ENCODE measurements at regions of chr2 and their contacts with region 1.

Region 1: GRCh38 chr2:85826990-85827878 is 61.6 kb downstream of the ST3GAL5 start:
- DNase-seq: peak; percentile 57 to 90 (median 80)
- ATAC-seq: peak; percentile 95 to 99 (median 98)
- H3K4me3 ChIP-seq: no peak overlapping the region
- H3K4me3 Mint-ChIP-seq: peak overlapping the region in 1 of 3 donors; percentile 28
- H3K27ac ChIP-seq: no peak overlapping the region
- H3K27ac Mint-ChIP-seq: peak overlapping the region; percentile 39 to 55
- H3K4me1 ChIP-seq: peaks cover 0 to 14% of the 10 kb centered on the region in 2 experiments
- H3K4me1 Mint-ChIP-seq: peaks cover 24 to 28% (median 25%) of the 10 kb centered on the region in 3 donors
- H3K27me3 ChIP-seq: peaks cover 0 to 13% of the 10 kb centered on the region in 2 experiments
- H3K27me3 Mint-ChIP-seq: peaks cover 0 to 2% of the 10 kb centered on the region in 2 donors

Region 2: GRCh38 chr2:85852937-85853498 is 25.8 kb after region 1 on chr2:
- CTCF ChIA-PET with region 1: interaction called in 1 of 2 experiments, 18 read pairs
- POLR2A ChIA-PET with region 1: interaction called in 1 of 2 experiments, 4 read pairs
- DNase-seq: peak; percentile 46 to 86 (median 74)
- ATAC-seq: peak; percentile 83 to 86 (median 85)
- H3K4me3 ChIP-seq: peak overlapping the region; percentile 41 to 60
- H3K4me3 Mint-ChIP-seq: peak overlapping the region; percentile 69 to 81 (median 77)
- H3K27ac ChIP-seq: peak overlapping the region; percentile 97
- H3K27ac Mint-ChIP-seq: peak overlapping the region; percentile 99 to 100
- H3K4me1 ChIP-seq: peaks cover 35 to 64% of the 10 kb centered on the region in 2 experiments
- H3K4me1 Mint-ChIP-seq: peaks cover 67 to 86% (median 76%) of the 10 kb centered on the region in 3 donors
- H3K27me3 ChIP-seq: no peaks in the 10 kb centered on the region
- H3K27me3 Mint-ChIP-seq: no peaks in the 10 kb centered on the region

Region 3: GRCh38 chr2:85878719-85879385 is 51.6 kb after region 1 on chr2:
- CTCF ChIA-PET with region 1: interaction called in 1 of 2 experiments, 10 read pairs
- POLR2A ChIA-PET with region 1: no interaction called
- DNase-seq: no peak
- ATAC-seq: peak in 2 of 4 experiments; percentile 51 to 64
- H3K4me3 ChIP-seq: no peak overlapping the region
- H3K4me3 Mint-ChIP-seq: peak overlapping the region in 1 of 3 donors; percentile 64
- H3K27ac ChIP-seq: no peak overlapping the region
- H3K27ac Mint-ChIP-seq: peak overlapping the region; percentile 70 to 75
- H3K4me1 ChIP-seq: peaks cover 19 to 34% of the 10 kb centered on the region in 2 experiments
- H3K4me1 Mint-ChIP-seq: peaks cover 73 to 81% (median 74%) of the 10 kb centered on the region in 3 donors
- H3K27me3 ChIP-seq: no peaks in the 10 kb centered on the region
- H3K27me3 Mint-ChIP-seq: no peaks in the 10 kb centered on the region

Region 4: GRCh38 chr2:85888684-85889626 is 61.7 kb after region 1 on chr2 and contains the start of gene ST3GAL5:
- CTCF ChIA-PET with region 1: interaction called, 23 to 59 read pairs
- POLR2A ChIA-PET with region 1: interaction called in 1 of 2 experiments, 3 read pairs
- DNase-seq: peak; percentile 81 to 97 (median 90)
- ATAC-seq: peak; percentile 82 to 89 (median 86)
- H3K4me3 ChIP-seq: peak within 1 kb of the TSS; percentile 85 to 92
- H3K4me3 Mint-ChIP-seq: peak within 1 kb of the TSS; percentile 93 to 96 (median 95)
- H3K27ac ChIP-seq: peak within 1 kb of the TSS; percentile 80
- H3K27ac Mint-ChIP-seq: peak within 1 kb of the TSS; percentile 93 to 98
- H3K4me1 ChIP-seq: peaks cover 30 to 67% of the 10 kb centered on the region in 2 experiments
- H3K4me1 Mint-ChIP-seq: peaks cover 70 to 77% (median 76%) of the 10 kb centered on the region in 3 donors
- H3K27me3 ChIP-seq: no peaks in the 10 kb centered on the region
- H3K27me3 Mint-ChIP-seq: no peaks in the 10 kb centered on the region
- total RNA-seq, gene ST3GAL5: 22.8 to 56.2 (median 31.9) TPM

Region 5: DNA sequence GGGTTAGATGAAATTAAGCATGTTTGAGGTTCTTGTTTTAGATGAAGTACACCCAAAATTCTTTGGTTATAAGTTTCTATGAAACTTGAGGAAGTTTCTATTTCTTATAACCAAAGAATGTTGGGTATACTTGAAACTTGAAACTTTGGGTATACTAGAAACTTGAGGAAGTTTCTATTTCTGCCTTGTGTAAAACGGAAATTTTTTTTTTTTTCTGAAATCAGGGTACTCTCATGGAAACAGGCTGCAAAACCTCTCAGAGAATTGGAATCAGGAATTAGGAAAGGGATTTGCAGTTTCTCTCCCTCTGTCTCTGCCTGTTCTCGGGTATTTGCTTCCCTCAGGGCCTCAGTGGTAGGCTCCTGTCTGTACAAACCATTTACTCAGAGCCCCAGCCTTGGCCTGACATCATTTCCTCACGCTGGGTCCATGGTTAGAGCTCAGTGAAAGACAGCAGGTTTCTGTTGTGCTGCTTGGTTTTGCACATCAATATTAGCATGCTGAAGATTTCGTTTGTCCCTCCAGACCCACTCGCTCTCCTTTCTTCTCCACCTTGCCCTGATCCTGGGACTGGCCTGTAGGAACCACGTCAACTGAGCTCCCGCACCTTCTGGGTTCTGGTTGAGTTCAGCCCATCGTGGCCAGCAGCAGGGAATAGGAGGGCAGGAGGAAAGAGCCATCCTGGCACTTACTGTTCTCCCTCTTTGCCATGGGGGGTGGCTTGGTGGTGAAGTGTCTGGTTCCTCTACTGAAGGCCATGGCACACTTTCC is 172.0 kb after region 1 on chr2:
- CTCF ChIA-PET with region 1: no interaction called
- POLR2A ChIA-PET with region 1: interaction called in 1 of 2 experiments, 10 read pairs
- DNase-seq: peak; percentile 6 to 61 (median 33)
- ATAC-seq: peak; percentile 77 to 97 (median 90)
- H3K4me3 ChIP-seq: no peak overlapping the region
- H3K4me3 Mint-ChIP-seq: peak overlapping the region; percentile 36 to 53 (median 42)
- H3K27ac ChIP-seq: peak overlapping the region; percentile 71
- H3K27ac Mint-ChIP-seq: peak overlapping the region; percentile 92 to 96
- H3K4me1 ChIP-seq: peaks cover 32 to 70% of the 10 kb centered on the region in 2 experiments
- H3K4me1 Mint-ChIP-seq: peaks cover 44 to 69% (median 53%) of the 10 kb centered on the region in 3 donors
- H3K27me3 ChIP-seq: no peaks in the 10 kb centered on the region
- H3K27me3 Mint-ChIP-seq: no peaks in the 10 kb centered on the region

Region 6: DNA sequence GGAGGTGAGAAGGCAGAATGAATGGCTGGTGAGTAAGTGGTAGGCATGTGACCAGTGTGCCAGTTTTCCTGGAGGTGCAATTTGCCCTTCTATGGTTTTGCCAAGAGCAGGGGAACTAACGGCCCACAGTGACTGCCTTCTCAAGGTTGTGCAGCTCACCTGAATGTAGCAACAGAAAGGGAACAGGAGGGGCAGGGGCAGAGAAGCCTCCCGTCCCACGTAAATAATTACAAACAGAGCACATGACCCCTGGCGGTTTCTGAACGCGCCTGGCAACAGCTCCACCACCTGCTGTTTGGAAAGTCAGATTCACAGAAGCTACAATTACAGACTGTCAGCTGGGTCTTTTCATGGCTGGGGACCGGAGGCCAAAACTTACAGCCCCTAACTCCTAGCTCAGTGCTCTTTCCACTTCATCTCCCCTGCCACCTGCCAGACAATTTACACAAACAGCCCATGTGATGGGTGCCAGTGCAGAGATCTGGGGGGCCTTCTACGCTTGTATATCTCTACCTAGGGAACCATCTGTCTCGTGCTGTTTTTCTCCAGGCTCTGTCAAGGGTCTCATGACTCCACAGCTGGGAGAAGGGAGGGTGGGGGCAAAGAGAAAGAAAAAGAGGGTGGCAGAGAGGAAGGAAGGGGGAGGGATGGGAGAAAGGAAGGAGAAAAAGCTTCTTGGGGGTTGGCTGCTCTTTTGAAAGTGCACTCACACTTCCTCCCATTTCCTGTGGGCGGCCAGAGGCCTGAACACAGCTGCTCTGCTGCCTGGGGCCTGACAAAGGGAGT is 208.8 kb after region 1 on chr2:
- CTCF ChIA-PET with region 1: interaction called, 15 to 26 read pairs
- POLR2A ChIA-PET with region 1: interaction called in 1 of 2 experiments, 4 read pairs
- DNase-seq: peak; percentile 38 to 88 (median 75)
- ATAC-seq: peak; percentile 52 to 57 (median 54)
- H3K4me3 ChIP-seq: peak overlapping the region; percentile 27 to 30
- H3K4me3 Mint-ChIP-seq: peak overlapping the region; percentile 67 to 78 (median 74)
- H3K27ac ChIP-seq: peak overlapping the region; percentile 96
- H3K27ac Mint-ChIP-seq: peak overlapping the region; percentile 99
- H3K4me1 ChIP-seq: peaks cover 65 to 84% of the 10 kb centered on the region in 2 experiments
- H3K4me1 Mint-ChIP-seq: peaks cover 85 to 96% (median 89%) of the 10 kb centered on the region in 3 donors
- H3K27me3 ChIP-seq: no peaks in the 10 kb centered on the region
- H3K27me3 Mint-ChIP-seq: no peaks in the 10 kb centered on the region

Region 7: DNA sequence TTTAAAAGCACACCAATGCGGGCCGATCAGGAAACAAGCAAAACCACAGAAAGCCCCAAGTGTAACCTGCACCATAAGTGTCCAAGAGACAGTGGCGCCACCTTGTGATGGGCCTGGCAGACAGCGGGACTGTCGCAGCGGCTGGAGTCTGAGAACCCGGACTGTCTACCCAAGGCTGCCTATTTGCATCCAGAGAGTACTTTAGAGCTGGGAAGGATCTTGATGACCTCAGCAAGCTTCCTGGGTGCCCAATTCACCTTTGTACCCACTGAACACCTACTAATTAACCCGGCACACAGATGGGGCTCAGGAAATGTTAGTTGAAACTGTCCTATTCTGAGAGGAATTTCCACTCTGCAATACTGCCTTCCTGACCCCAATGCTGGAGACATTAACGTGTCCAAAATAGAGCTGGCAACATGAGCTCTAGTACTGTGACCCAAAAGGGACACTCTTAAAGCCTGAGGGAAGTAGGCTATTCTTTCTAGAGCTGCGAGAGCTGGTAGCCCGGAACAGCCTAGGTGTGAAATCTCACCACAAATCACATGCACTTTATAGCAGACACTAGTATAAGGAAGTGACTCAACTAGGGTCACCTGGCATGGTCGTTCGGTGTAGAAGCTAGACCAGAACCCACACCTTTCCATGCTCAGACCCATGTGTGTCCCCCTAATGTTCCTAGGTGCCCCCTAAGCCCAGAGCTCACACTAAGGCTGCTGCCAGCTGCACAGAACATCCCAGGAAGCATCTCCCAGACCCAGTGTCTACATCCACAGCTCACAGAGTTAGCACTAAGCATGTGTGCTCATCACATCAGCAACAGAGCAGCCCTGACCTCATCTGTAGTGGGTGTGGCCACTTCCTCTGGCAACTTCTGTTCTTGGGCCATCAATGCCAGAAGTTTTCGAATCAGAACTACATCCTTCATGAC is 253.0 kb after region 1 on chr2:
- CTCF ChIA-PET with region 1: interaction called, 57 to 154 read pairs
- POLR2A ChIA-PET with region 1: interaction called, 3 read pairs
- DNase-seq: peak; percentile 66 to 90 (median 83)
- ATAC-seq: peak; percentile 77 to 88 (median 84)
- H3K4me3 ChIP-seq: no peak overlapping the region
- H3K4me3 Mint-ChIP-seq: peak overlapping the region in 1 of 3 donors; percentile 10
- H3K27ac ChIP-seq: peak overlapping the region; percentile 82
- H3K27ac Mint-ChIP-seq: peak overlapping the region; percentile 87 to 88
- H3K4me1 ChIP-seq: peaks cover 0 to 34% of the 10 kb centered on the region in 2 experiments
- H3K4me1 Mint-ChIP-seq: peaks cover 24 to 36% (median 33%) of the 10 kb centered on the region in 3 donors
- H3K27me3 ChIP-seq: no peaks in the 10 kb centered on the region
- H3K27me3 Mint-ChIP-seq: no peaks in the 10 kb centered on the region

Measured in T-cell (primary cell).